ENCODE measurements at regions of chr12 and their contacts with region 1.

Region 1: GRCh38 chr12:42144408-42145196 is at the start of gene GXYLT1:
- DNase-seq: peak; percentile 87
- H3K4me3 ChIP-seq: peak within 1 kb of the TSS; percentile 98
- H3K27ac ChIP-seq: peak within 1 kb of the TSS; percentile 49
- H3K4me1 ChIP-seq: peaks cover 23% of the 10 kb centered on the region
- CTCF ChIP-seq: no peak
- total RNA-seq, gene GXYLT1: 7.9 and 9.0 TPM in 2 replicates

Region 2: DNA sequence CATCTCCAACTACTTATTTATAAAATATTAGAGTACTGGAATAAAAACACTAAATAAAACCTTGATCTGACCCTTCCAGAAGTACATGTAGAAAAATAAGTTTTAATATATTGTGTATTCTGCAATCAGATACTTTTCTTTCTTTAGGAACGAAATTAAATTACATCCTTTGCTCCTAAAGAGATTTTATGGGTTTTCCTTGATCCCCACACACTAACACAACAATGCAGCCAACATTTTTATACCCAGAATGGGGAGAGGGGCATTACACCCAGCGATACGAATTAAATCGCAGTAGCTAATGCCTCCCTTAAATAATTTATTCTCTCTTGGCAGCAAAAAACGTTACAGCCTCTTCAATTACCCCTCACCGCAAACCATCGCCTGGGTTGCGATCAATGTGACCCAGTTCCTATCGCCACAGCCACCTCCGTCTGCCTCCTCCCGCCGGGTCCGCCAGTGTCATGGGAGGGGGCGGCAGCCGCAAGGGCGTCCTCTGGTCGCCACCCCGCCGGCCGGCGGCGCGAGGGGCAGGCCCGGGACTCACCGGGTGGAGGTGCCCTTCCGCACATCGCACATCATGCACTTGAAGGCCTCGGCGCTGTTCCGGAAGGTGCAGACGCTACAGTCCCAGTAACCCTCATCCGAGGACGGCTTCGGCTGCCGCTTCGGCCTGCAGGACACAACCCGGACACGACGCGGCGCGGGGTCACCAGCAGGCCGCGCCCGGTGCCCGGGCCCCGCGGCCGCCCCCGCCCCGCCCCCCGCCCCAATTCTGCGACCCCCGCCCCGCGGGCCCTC is 92.7 kb after region 1 on chr12:
- CTCF ChIA-PET with region 1: no interaction called
- POLR2A ChIA-PET with region 1: no interaction called
- intact Hi-C with region 1: loop called (anchors 2 kb)
- DNase-seq: peak; percentile 90
- H3K4me3 ChIP-seq: peak overlapping the region; percentile 79
- H3K27ac ChIP-seq: peak overlapping the region; percentile 61
- H3K4me1 ChIP-seq: peaks cover 24% of the 10 kb centered on the region
- CTCF ChIP-seq: peak; percentile 67

Measured in OCI-LY7 (cell line).